ENCODE measurements at regions of chr16 and their contacts with region 1.

Region 1: DNA sequence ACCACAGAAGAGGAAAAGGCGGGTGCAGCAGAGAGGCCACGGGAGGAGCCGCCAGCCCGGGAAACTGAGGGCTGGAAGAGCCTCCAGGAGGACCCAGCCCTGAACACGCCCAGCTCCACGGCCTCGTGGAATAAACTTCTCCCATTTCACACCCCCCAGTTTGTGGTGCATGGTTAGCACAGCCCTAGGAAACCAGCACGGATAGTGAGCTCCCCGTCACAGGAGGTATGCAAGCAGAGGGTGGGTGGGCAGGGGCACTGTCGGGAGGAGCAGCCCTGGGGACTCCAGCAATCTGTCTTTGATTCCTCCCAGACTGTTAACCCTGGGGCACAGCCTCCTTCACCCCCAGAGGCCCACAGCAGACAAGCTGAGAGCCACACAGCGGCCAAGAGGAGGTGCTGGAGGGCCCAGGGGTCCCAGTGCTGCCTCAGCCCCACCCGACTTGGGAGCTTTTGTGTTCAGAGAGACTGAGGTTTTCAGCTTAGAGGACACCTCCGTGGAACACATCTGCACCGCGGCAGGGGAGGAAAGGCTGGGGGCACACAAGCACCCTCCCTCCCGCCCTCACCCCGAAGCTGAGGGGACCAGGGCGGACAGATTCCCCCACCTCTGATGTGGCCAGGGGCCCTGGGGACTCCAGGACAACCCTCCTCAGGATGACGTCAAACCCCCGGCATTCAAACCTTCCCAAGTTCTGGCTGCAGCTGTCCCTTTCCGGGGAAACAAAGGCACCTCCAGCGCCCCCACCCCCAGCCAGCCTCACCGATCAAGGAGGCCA is 1.7 kb upstream of the IL17C start:
- DNase-seq: no peak
- H3K4me3 ChIP-seq: no peak overlapping the region
- H3K4me3 Mint-ChIP-seq: no peak overlapping the region
- H3K27ac Mint-ChIP-seq: no peak overlapping the region
- H3K4me1 ChIP-seq: peaks cover 12% of the 10 kb centered on the region; the same call in 1 of the 2 replicates
- H3K4me1 Mint-ChIP-seq: no peaks in the 10 kb centered on the region
- H3K27me3 ChIP-seq: no peaks in the 10 kb centered on the region
- H3K27me3 Mint-ChIP-seq: no peaks in the 10 kb centered on the region
- CTCF ChIP-seq: no peak

Region 2: GRCh38 chr16:88569985-88570690 is 66.5 kb before region 1 on chr16 and contains the start of gene ZC3H18:
- CTCF ChIA-PET with region 1: interaction called, 10 read pairs
- POLR2A ChIA-PET with region 1: interaction called, 3 read pairs
- intact Hi-C with region 1: no loop called
- DNase-seq: peak; percentile 95 to 98
- H3K4me3 ChIP-seq: peak within 1 kb of the TSS; percentile 96
- H3K4me3 Mint-ChIP-seq: peak within 1 kb of the TSS; percentile 80
- H3K27ac Mint-ChIP-seq: peak within 1 kb of the TSS; percentile 91
- H3K4me1 ChIP-seq: peaks cover 9% of the 10 kb centered on the region
- H3K4me1 Mint-ChIP-seq: no peaks in the 10 kb centered on the region
- H3K27me3 ChIP-seq: no peaks in the 10 kb centered on the region
- H3K27me3 Mint-ChIP-seq: no peaks in the 10 kb centered on the region
- CTCF ChIP-seq: no peak
- total RNA-seq, gene ZC3H18: 82.0 and 91.9 TPM in 2 replicates

Region 3: DNA sequence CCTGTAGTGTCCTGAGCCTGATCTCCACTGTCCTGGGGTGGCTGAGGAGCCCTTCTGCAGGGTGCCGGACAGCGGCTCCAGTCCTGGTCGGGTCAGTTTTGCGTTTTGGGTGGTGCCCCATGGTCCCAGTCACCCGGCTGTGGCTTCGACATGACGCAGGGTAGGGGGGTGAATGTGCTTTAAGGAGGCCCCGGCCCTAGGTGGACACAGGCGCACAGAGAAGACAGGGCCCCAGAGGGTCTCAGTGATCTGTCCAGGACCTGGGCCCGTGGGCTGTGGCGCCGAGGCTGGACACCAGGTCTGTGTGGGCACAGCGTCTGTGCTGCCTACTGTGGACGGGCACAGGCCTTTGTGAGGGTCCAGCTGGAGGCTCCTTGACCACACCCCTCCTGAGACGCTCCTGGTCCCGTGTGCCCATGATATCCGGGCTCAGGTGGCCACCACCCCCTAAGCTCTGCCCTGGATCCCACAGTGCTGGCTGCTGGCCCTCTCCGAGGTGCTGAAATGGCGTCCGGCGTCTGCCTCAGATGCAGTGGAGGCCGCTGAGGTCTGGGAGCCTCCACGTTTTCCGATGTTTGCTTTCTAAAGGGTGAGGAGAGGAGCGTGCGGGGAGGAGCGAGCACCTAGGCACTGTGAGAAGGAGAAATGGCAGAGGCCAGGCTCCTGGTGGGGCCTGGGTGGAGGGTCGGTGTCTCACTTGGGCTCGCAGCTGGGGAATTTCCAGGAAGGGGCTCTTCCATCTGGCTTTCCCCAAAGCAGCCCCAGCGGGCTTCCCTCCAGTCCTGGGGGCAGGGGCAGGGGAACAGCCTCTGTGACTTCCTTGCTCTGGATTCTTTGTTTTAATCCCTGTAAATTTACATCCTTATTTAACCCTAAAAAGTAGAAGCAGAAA is 400.8 kb after region 1 on chr16:
- CTCF ChIA-PET with region 1: no interaction called
- POLR2A ChIA-PET with region 1: no interaction called
- intact Hi-C with region 1: no loop called
- DNase-seq: peak in 1 of 2 experiments; percentile 82
- H3K4me3 ChIP-seq: no peak overlapping the region
- H3K4me3 Mint-ChIP-seq: no peak overlapping the region
- H3K27ac Mint-ChIP-seq: no peak overlapping the region
- H3K4me1 ChIP-seq: no peaks in the 10 kb centered on the region
- H3K4me1 Mint-ChIP-seq: no peaks in the 10 kb centered on the region
- H3K27me3 ChIP-seq: no peaks in the 10 kb centered on the region; the same call in none of the 2 replicates
- H3K27me3 Mint-ChIP-seq: peaks cover 45% of the 10 kb centered on the region
- CTCF ChIP-seq: no peak

Measured in Caco-2 (cell line).